ENCODE measurements at regions of chr1 and their contacts with region 1.

Region 1: GRCh38 chr1:182391362-182392044 is at the start of gene GLUL:
- DNase-seq: peak; percentile 97 to 99 (median 98)
- ATAC-seq: peak; percentile 89
- H3K4me3 ChIP-seq: peak within 1 kb of the TSS; percentile 77
- H3K27ac ChIP-seq: peak within 1 kb of the TSS; percentile 92
- H3K4me1 ChIP-seq: peaks cover 24 to 52% of the 10 kb centered on the region in 2 experiments
- H3K27me3 ChIP-seq: no peaks in the 10 kb centered on the region
- CTCF ChIP-seq: peak in 1 of 3 experiments; percentile 60; a peak in 3 of 6 replicates
- EP300 ChIP-seq: no peak
- POLR2A ChIP-seq: peak; percentile 100
- RAD21 ChIP-seq: peak; percentile 26 to 37; a peak in 3 of 4 replicates
- polyA plus RNA-seq, gene GLUL: 3,526 to 4,222 TPM

Region 2: DNA sequence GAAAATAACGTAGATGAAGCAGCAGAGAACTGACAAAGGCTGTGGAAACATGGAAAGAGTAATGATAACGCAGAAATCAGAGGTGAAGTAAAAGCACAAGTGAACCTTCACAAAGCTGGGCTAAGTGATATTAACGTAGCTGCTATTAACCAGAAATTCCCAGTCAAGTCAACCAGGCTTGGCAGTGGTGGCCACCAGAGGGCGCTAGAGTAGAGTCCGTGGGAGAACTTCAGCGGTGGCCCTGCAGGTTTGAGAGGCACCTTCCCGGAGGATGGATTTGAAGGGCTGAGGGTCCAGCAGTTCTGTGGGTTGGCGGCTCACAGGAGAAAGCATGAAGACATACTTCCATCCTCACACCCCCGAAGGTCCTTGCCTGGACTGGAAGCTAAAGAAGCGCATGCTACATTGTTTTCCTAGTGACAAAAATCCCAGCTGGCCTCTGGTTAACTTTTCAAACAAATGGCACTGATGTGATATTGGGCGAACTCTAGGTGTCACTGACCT is 248.3 kb before region 1 on chr1:
- CTCF ChIA-PET with region 1: interaction called, 53 read pairs
- POLR2A ChIA-PET with region 1: interaction called, 137 read pairs
- in situ Hi-C with region 1: loop called (anchors 5 kb)
- intact Hi-C with region 1: loop called (anchors 1 kb)
- DNase-seq: peak; percentile 83 to 93 (median 88)
- ATAC-seq: peak; percentile 92
- H3K4me3 ChIP-seq: no peak overlapping the region
- H3K27ac ChIP-seq: no peak overlapping the region
- H3K4me1 ChIP-seq: peaks cover 12% of the 10 kb centered on the region in 2 experiments
- H3K27me3 ChIP-seq: peaks cover 0 to 4% of the 10 kb centered on the region in 2 experiments; a peak in 2 of 5 replicates
- CTCF ChIP-seq: peak; percentile 97 to 99 (median 98)
- EP300 ChIP-seq: peak; percentile 25; the same call in 1 of the 2 replicates
- POLR2A ChIP-seq: no peak
- RAD21 ChIP-seq: peak; percentile 96 to 100

Region 3: DNA sequence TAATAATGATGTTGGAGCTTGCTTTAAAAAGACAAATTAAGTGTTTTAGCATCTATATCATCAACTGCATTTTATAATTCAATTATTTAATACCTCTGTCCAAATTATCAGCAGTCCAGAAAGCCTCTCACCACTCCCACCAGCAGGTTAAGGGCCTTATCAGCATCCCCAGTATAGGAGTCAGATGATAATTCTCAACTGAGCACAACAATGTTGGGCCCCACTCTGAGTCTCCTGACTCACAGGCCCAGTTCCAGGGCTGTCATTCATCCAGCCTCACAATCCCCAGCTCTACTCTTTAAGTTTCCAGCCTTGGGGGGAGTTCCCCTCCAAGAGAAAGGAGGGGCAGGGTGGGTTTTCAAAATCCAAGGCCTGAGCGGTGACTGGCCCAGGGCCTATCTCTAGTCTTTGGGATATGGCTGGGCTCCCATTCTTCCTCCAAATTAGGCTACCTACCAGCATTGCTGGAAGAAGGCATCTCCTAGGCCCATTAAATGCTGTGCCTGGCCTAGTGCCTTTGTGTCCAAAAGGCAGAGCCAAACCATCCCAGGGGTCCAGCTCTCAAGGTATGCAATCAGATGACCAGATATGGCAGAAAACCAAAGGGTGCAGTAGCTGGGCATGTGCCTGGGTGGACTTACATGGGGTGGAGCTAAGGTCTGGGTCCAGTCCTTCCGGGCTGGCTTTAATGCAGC is 134.0 kb before region 1 on chr1:
- CTCF ChIA-PET with region 1: no interaction called
- POLR2A ChIA-PET with region 1: interaction called, 21 read pairs
- in situ Hi-C with region 1: no loop called
- intact Hi-C with region 1: loop called (anchors 2 kb)
- DNase-seq: peak; percentile 79 to 95 (median 86)
- ATAC-seq: peak; percentile 93
- H3K4me3 ChIP-seq: no peak overlapping the region
- H3K27ac ChIP-seq: peak overlapping the region; percentile 83
- H3K4me1 ChIP-seq: peaks cover 37 to 47% of the 10 kb centered on the region in 2 experiments
- H3K27me3 ChIP-seq: no peaks in the 10 kb centered on the region
- CTCF ChIP-seq: peak in 1 of 3 experiments; percentile 22; a peak in 2 of 6 replicates
- EP300 ChIP-seq: peak; percentile 94
- POLR2A ChIP-seq: no peak
- RAD21 ChIP-seq: peak; percentile 30 to 33; a peak in 3 of 4 replicates

Region 4: GRCh38 chr1:182337736-182338571 is 53.5 kb before region 1 on chr1:
- CTCF ChIA-PET with region 1: no interaction called
- POLR2A ChIA-PET with region 1: interaction called, 11 read pairs
- in situ Hi-C with region 1: no loop called
- intact Hi-C with region 1: loop called (anchors 2 kb)
- DNase-seq: peak; percentile 87 to 93 (median 90)
- ATAC-seq: peak; percentile 80
- H3K4me3 ChIP-seq: no peak overlapping the region
- H3K27ac ChIP-seq: peak overlapping the region; percentile 83
- H3K4me1 ChIP-seq: peaks cover 36 to 65% of the 10 kb centered on the region in 2 experiments
- H3K27me3 ChIP-seq: no peaks in the 10 kb centered on the region
- CTCF ChIP-seq: no peak
- EP300 ChIP-seq: peak; percentile 100
- POLR2A ChIP-seq: no peak; the same call in 1 of the 2 replicates
- RAD21 ChIP-seq: peak; percentile 15 to 48; a peak in 3 of 4 replicates

Region 5: DNA sequence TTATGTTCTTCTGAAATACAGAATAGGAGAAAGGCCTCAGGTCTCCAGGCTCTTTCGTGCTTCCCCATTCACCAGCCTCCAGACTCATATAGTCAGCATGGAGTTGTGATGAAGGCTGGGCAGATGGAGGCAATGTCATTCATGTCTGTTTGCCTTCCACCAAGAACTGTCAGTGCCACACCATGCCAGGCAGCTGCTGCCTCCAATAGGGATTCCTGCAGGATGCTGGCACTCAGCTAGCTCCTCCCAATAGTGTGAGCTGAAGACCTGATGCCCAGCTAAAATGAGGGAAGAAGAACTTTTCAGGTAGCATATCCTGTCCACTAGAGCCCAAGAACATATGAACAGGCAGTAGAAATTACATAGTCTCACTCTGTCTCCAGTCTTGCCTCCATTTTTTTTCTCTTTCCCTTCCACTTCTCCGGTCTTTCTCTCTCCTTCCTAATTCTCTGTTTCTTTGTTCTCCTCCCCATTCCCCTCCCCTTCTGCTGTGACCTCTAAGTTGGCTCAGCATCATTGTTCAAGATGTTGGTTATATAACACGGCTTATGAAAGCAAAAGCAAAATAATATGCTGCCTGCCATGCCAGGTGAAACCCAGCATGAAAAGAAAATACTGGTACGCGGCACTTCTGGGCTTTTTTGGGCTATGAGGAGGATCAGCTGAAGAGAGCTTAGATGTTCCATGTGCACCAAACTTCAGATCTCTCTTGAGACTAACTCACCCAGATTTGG is 17.2 kb before region 1 on chr1:
- CTCF ChIA-PET with region 1: no interaction called
- POLR2A ChIA-PET with region 1: interaction called, 60 read pairs
- in situ Hi-C with region 1: no loop called
- intact Hi-C with region 1: no loop called
- DNase-seq: no peak
- ATAC-seq: no peak
- H3K4me3 ChIP-seq: no peak overlapping the region
- H3K27ac ChIP-seq: no peak overlapping the region
- H3K4me1 ChIP-seq: no peaks in the 10 kb centered on the region
- H3K27me3 ChIP-seq: no peaks in the 10 kb centered on the region
- CTCF ChIP-seq: no peak
- EP300 ChIP-seq: no peak
- POLR2A ChIP-seq: no peak
- RAD21 ChIP-seq: no peak

Region 6: GRCh38 chr1:182789138-182790076 is 397.9 kb after region 1 on chr1 and contains the start of gene NPL:
- CTCF ChIA-PET with region 1: no interaction called
- POLR2A ChIA-PET with region 1: no interaction called
- in situ Hi-C with region 1: no loop called
- intact Hi-C with region 1: loop called (anchors 5 kb)
- DNase-seq: peak; percentile 81 to 89 (median 82)
- ATAC-seq: peak; percentile 88
- H3K4me3 ChIP-seq: peak within 1 kb of the TSS; percentile 38
- H3K27ac ChIP-seq: peak within 1 kb of the TSS; percentile 61
- H3K4me1 ChIP-seq: peaks cover 23 to 41% of the 10 kb centered on the region in 2 experiments
- H3K27me3 ChIP-seq: no peaks in the 10 kb centered on the region
- CTCF ChIP-seq: no peak
- EP300 ChIP-seq: no peak
- POLR2A ChIP-seq: peak; percentile 89
- RAD21 ChIP-seq: no peak
- polyA plus RNA-seq, gene NPL: 20.8 to 22.3 TPM

Measured in K562 (cell line).